ENCODE measurements at regions of chr20 and their contacts with region 1.

Region 1: GRCh38 chr20:35619196-35620095 is 3.8 kb downstream of the SPAG4 start:
- DNase-seq: peak; percentile 98 to 99
- H3K4me3 ChIP-seq: peak overlapping the region; percentile 66
- H3K4me3 Mint-ChIP-seq: peak overlapping the region; percentile 98
- H3K27ac Mint-ChIP-seq: peak overlapping the region; percentile 73
- H3K4me1 ChIP-seq: peaks cover 5% of the 10 kb centered on the region; the same call in 1 of the 2 replicates
- H3K4me1 Mint-ChIP-seq: peaks cover 29% of the 10 kb centered on the region
- H3K27me3 ChIP-seq: no peaks in the 10 kb centered on the region
- H3K27me3 Mint-ChIP-seq: no peaks in the 10 kb centered on the region
- CTCF ChIP-seq: peak; percentile 94 to 99

Region 2: DNA sequence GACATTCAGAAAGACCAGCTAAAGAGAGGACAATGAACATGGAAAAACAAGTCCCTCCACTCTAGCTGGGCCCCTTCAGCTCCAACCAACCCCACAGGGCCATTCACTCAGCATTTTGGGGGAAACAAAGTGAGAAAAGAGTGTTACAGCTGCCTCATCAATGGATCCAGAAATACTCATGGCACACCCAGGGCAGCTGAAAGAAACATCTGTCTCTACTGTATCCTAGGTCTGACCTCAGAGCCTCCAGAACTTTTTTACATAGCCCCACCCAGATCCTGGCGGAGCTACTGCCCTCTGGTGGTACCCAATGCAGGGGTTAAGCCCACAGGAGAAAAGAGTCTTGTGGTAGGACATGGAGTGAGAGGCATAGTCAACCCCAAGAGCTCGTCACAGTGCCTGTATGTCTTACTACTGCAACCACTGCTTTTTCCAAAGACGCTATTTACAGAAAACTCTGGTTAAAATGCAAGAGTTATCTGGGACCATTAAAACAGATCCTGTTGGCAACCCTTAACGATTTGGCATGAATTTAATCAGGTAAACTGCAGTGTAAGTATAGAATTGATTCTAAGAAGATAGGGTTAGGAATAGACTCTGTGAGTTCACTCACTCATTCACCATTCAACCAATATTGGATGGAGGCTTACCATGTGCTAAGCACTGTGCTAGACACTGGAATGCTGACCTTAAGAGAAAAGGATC is 289.9 kb before region 1 on chr20:
- CTCF ChIA-PET with region 1: no interaction called
- POLR2A ChIA-PET with region 1: no interaction called
- intact Hi-C with region 1: loop called (anchors 10 kb)
- DNase-seq: peak; percentile 91 to 93
- H3K4me3 ChIP-seq: no peak overlapping the region
- H3K4me3 Mint-ChIP-seq: no peak overlapping the region
- H3K27ac Mint-ChIP-seq: peak overlapping the region; percentile 69
- H3K4me1 ChIP-seq: peaks cover 55% of the 10 kb centered on the region
- H3K4me1 Mint-ChIP-seq: peaks cover 32% of the 10 kb centered on the region
- H3K27me3 ChIP-seq: no peaks in the 10 kb centered on the region
- H3K27me3 Mint-ChIP-seq: no peaks in the 10 kb centered on the region
- CTCF ChIP-seq: peak; percentile 92 to 99

Region 3: DNA sequence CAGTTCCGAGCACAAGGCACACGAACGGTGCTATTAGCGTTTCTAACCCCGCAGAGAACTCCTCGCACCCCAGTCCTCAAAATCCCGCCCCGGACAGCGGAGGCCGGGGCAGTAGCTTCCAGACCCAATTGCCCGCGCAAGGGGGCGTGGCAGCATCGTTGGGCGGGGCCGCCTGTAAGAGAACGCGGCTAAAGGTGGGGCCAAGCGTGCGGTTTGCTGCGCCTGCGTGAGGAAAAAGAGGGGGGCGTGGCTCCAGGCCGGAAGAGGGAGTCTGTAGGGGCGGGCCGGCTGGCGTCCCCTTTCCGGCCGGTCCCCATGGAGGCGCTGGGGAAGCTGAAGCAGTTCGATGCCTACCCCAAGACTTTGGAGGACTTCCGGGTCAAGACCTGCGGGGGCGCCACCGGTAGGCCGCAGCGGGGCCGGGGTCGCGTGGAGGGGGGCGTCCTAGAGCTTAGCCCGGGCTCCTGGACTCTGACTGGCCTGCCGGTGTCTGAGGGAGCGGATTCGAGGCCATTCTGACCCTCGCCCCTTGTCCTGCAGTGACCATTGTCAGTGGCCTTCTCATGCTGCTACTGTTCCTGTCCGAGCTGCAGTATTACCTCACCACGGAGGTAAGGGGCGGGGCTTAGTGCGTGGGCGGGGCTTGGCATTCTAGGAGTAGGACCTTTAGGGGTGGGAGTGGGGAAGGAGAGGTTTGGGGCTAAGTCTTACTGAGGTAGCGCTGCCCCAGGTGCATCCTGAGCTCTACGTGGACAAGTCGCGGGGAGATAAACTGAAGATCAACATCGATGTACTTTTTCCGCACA is 77.5 kb before region 1 on chr20 and contains the start of gene ERGIC3:
- CTCF ChIA-PET with region 1: interaction called, 15 read pairs
- POLR2A ChIA-PET with region 1: interaction called, 20 read pairs
- intact Hi-C with region 1: loop called (anchors 1 kb)
- DNase-seq: peak; percentile 100
- H3K4me3 ChIP-seq: peak within 1 kb of the TSS; percentile 85
- H3K4me3 Mint-ChIP-seq: peak within 1 kb of the TSS; percentile 82
- H3K27ac Mint-ChIP-seq: peak within 1 kb of the TSS; percentile 89
- H3K4me1 ChIP-seq: 0 out of 2 replicates have a peak, but pooled peaks cover 5% of the 10 kb centered on the region
- H3K4me1 Mint-ChIP-seq: peaks cover 7% of the 10 kb centered on the region
- H3K27me3 ChIP-seq: no peaks in the 10 kb centered on the region
- H3K27me3 Mint-ChIP-seq: no peaks in the 10 kb centered on the region
- CTCF ChIP-seq: no peak
- total RNA-seq, gene ERGIC3: 711 and 728 TPM in 2 replicates

Region 4: GRCh38 chr20:35601008-35601973 is 18.2 kb before region 1 on chr20:
- CTCF ChIA-PET with region 1: interaction called, 37 read pairs
- POLR2A ChIA-PET with region 1: interaction called, 6 read pairs
- intact Hi-C with region 1: loop called (anchors 1 kb)
- DNase-seq: peak; percentile 90
- H3K4me3 ChIP-seq: peak overlapping the region; percentile 51
- H3K4me3 Mint-ChIP-seq: peak overlapping the region; percentile 68
- H3K27ac Mint-ChIP-seq: no peak overlapping the region
- H3K4me1 ChIP-seq: peaks cover 5% of the 10 kb centered on the region; the same call in 1 of the 2 replicates
- H3K4me1 Mint-ChIP-seq: no peaks in the 10 kb centered on the region
- H3K27me3 ChIP-seq: no peaks in the 10 kb centered on the region
- H3K27me3 Mint-ChIP-seq: peaks cover 10% of the 10 kb centered on the region
- CTCF ChIP-seq: peak; percentile 48 to 78

Region 5: DNA sequence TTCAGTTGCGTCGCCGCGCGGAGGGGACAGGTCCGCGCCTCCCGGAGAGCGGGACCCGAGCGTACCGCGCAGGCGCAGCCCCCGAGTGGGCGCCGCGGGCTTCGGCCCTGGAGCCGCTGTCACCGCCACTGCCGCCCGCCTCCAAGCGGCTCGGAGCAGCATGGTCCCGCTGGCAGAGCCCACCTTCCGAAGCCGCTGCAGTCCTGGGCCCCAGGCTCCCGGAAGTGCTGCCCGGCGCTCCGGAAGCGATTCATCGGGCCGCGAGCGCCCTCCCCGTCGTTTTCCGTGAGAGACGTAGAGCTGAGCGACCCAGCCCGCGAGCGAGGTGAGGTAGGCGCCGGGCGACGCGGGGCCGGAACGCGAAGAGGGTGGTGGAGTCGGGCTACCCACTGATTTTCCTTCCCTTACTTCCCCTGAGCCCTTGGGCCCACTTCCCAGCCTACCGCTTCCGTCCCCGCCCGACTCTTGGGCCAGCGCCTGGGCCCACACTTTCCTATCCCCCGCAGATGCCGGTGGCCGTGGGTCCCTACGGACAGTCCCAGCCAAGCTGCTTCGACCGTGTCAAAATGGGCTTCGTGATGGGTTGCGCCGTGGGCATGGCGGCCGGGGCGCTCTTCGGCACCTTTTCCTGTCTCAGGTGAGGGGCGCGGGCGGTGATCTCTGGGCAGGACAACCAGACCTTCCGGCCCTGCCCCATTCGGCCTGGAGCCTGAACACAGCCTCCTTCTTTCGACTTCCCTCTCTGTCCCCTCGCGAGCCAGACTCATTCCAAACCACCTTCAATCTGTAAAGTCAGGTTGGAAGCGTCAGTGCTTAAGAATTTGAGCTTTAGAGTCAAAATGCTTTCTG is 79.9 kb after region 1 on chr20 and contains the starts of genes NFS1 and ROMO1:
- CTCF ChIA-PET with region 1: interaction called, 6 read pairs
- POLR2A ChIA-PET with region 1: interaction called, 10 read pairs
- intact Hi-C with region 1: loop called (anchors 1 kb)
- DNase-seq: peak; percentile 95 to 98
- H3K4me3 ChIP-seq: peak within 1 kb of the TSS; percentile 93
- H3K4me3 Mint-ChIP-seq: peak within 1 kb of the TSS; percentile 91
- H3K27ac Mint-ChIP-seq: peak within 1 kb of the TSS; percentile 85
- H3K4me1 ChIP-seq: peaks cover 22% of the 10 kb centered on the region
- H3K4me1 Mint-ChIP-seq: peaks cover 35% of the 10 kb centered on the region
- H3K27me3 ChIP-seq: no peaks in the 10 kb centered on the region
- H3K27me3 Mint-ChIP-seq: no peaks in the 10 kb centered on the region
- CTCF ChIP-seq: peak; percentile 32 to 52
- total RNA-seq, gene NFS1: 69.8 and 77.1 TPM in 2 replicates
- total RNA-seq, gene ROMO1: 354 and 357 TPM in 2 replicates

Region 6: GRCh38 chr20:35883778-35884540 is 264.5 kb after region 1 on chr20:
- CTCF ChIA-PET with region 1: interaction called, 11 read pairs
- POLR2A ChIA-PET with region 1: no interaction called
- intact Hi-C with region 1: loop called (anchors 5 kb)
- DNase-seq: peak; percentile 88
- H3K4me3 ChIP-seq: no peak overlapping the region
- H3K4me3 Mint-ChIP-seq: peak overlapping the region; percentile 13
- H3K27ac Mint-ChIP-seq: peak overlapping the region; percentile 68
- H3K4me1 ChIP-seq: peaks cover 14% of the 10 kb centered on the region
- H3K4me1 Mint-ChIP-seq: peaks cover 7% of the 10 kb centered on the region
- H3K27me3 ChIP-seq: no peaks in the 10 kb centered on the region
- H3K27me3 Mint-ChIP-seq: no peaks in the 10 kb centered on the region
- CTCF ChIP-seq: peak; percentile 94 to 96

Region 7: GRCh38 chr20:36573103-36573794 is 953.8 kb after region 1 on chr20 and contains the start of gene TGIF2:
- CTCF ChIA-PET with region 1: no interaction called
- POLR2A ChIA-PET with region 1: interaction called, 10 read pairs
- intact Hi-C with region 1: no loop called
- DNase-seq: peak; percentile 96 to 99
- H3K4me3 ChIP-seq: peak within 1 kb of the TSS; percentile 82
- H3K4me3 Mint-ChIP-seq: peak within 1 kb of the TSS; percentile 79
- H3K27ac Mint-ChIP-seq: peak within 1 kb of the TSS; percentile 63
- H3K4me1 ChIP-seq: peaks cover 29% of the 10 kb centered on the region
- H3K4me1 Mint-ChIP-seq: peaks cover 12% of the 10 kb centered on the region
- H3K27me3 ChIP-seq: no peaks in the 10 kb centered on the region
- H3K27me3 Mint-ChIP-seq: no peaks in the 10 kb centered on the region
- CTCF ChIP-seq: no peak
- total RNA-seq, gene TGIF2: 58.4 and 60.6 TPM in 2 replicates